Dendritic cell treated with granulocyte-macrophage colony-stimulating factor and Interleukin-4, amounts not matched to agents 40 ng/mL and 50 ng/mL, for 4 days (primary cell): ENCODE measurements at regions of chr5 and their contacts with region 1.

Region 1: GRCh38 chr5:61790678-61791077 is 458.6 kb downstream of the ZSWIM6 start:
- H3K4me3 Mint-ChIP-seq: no peak overlapping the region
- H3K27ac Mint-ChIP-seq: no peak overlapping the region
- H3K4me1 Mint-ChIP-seq: no peaks in the 10 kb centered on the region
- H3K27me3 Mint-ChIP-seq: peaks cover 2% of the 10 kb centered on the region

Region 2: DNA sequence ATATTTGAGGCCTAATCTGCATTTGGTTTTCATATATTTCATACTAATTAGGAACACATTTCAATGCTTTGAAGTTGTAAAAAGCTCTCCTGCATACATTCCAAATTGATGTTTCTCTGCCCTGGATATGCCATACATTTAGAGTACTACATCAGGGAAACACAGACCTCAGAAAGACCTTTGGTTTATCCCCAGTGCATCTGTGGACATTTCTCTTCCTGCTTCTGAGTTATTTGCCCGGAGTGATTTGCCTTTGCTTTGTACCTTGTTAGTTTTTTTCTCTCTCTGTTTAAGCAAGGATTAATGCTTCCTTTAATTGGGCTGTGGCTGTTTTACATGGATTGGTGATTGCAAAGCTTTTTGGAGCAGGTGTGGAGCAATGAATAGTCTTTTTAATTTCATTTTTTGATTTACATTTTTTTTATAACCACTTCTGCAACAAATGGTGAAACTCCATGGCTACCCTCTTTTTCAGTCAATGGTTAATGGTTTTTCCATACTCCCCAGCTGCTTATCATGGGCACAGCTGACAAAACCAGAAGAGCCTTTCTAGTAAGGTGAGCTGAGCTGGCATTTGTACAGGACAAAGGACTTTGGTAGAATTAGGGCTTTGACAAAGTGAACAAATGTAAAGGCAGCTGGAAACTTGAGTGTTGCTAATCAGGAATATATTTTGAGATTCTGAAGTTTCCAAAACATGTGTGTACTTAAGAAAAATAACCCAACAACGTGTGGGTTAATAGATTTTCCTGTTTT is 404.5 kb before region 1 on chr5:
- intact Hi-C with region 1: loop called (anchors 10 kb)
- H3K4me3 Mint-ChIP-seq: no peak overlapping the region
- H3K27ac Mint-ChIP-seq: no peak overlapping the region
- H3K4me1 Mint-ChIP-seq: peaks cover 17% of the 10 kb centered on the region
- H3K27me3 Mint-ChIP-seq: no peaks in the 10 kb centered on the region

Region 3: GRCh38 chr5:61905613-61906012 is 114.9 kb after region 1 on chr5:
- intact Hi-C with region 1: no loop called
- H3K4me3 Mint-ChIP-seq: no peak overlapping the region
- H3K27ac Mint-ChIP-seq: no peak overlapping the region
- H3K4me1 Mint-ChIP-seq: no peaks in the 10 kb centered on the region
- H3K27me3 Mint-ChIP-seq: no peaks in the 10 kb centered on the region